SK-N-SH (cell line): ENCODE measurements at regions of chr19 and their contacts with region 1.

Region 1: GRCh38 chr19:16041299-16041990 is 34.9 kb upstream of the TPM4 start:
- DNase-seq: peak; percentile 90
- H3K4me3 ChIP-seq: peak overlapping the region in 1 of 2 experiments; percentile 42; a peak in 1 of 4 replicates
- H3K27ac ChIP-seq: no peak overlapping the region
- H3K4me1 ChIP-seq: no peaks in the 10 kb centered on the region; a peak in 1 of 4 replicates
- H3K27me3 ChIP-seq: peaks cover 8% of the 10 kb centered on the region; the same call in 1 of the 2 replicates
- CTCF ChIP-seq: peak; percentile 98
- EP300 ChIP-seq: no peak
- RAD21 ChIP-seq: peak; percentile 92

Region 2: GRCh38 chr19:16001481-16002312 is 39.7 kb before region 1 on chr19:
- CTCF ChIA-PET with region 1: no interaction called
- POLR2A ChIA-PET with region 1: no interaction called
- DNase-seq: no peak
- H3K4me3 ChIP-seq: peak overlapping the region; percentile 35 to 53; a peak in 3 of 4 replicates
- H3K27ac ChIP-seq: no peak overlapping the region
- H3K4me1 ChIP-seq: no peaks in the 10 kb centered on the region
- H3K27me3 ChIP-seq: no peaks in the 10 kb centered on the region
- CTCF ChIP-seq: no peak
- EP300 ChIP-seq: no peak
- RAD21 ChIP-seq: no peak

Region 3: GRCh38 chr19:16062789-16063188 is 21.3 kb after region 1 on chr19:
- CTCF ChIA-PET with region 1: interaction called, 25 read pairs
- POLR2A ChIA-PET with region 1: no interaction called
- DNase-seq: peak; percentile 73
- H3K4me3 ChIP-seq: no peak overlapping the region
- H3K27ac ChIP-seq: no peak overlapping the region
- H3K4me1 ChIP-seq: no peaks in the 10 kb centered on the region; a peak in 1 of 4 replicates
- H3K27me3 ChIP-seq: no peaks in the 10 kb centered on the region; the same call in 1 of the 2 replicates
- CTCF ChIP-seq: peak; percentile 90
- EP300 ChIP-seq: no peak
- RAD21 ChIP-seq: peak; percentile 36; the same call in 1 of the 2 replicates

Region 4: DNA sequence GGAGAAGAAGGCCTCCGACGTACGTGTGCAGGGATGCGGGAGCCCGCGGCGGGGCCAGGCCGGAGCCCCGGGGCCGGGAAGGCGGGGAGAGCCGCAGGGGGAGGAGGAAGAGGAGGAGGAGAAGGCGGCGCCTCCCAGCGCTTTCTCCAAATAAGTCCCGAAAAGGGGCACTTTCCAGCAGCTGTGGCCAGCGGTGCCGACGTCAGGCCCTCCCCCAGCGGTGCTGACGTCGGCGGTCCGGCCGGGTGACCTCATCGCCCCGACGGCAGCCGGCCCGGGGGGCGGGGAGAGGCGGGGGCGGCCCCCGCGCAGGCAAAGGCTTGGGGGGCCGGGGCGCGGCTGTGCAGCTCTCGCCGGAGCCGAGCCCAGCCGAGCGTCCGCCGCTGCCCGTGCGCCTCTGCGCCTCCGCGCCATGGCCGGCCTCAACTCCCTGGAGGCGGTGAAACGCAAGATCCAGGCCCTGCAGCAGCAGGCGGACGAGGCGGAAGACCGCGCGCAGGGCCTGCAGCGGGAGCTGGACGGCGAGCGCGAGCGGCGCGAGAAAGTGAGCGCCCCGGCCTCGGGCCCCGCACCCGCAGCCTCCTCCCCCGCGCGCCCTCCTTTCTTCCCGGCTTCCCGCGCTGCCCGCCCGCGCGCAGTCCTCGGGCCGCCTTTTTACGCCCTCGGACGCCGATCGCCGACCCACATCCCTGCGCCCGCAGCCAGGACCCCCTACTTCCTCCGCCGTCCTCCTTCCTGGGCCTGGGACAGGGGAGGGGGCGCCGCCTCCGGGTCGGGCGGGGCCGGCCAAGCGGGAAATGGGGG is 34.9 kb after region 1 on chr19 and contains the start of gene TPM4:
- CTCF ChIA-PET with region 1: interaction called, 37 read pairs
- POLR2A ChIA-PET with region 1: no interaction called
- DNase-seq: peak; percentile 86
- H3K4me3 ChIP-seq: peak within 1 kb of the TSS; percentile 74 to 78
- H3K27ac ChIP-seq: peak within 1 kb of the TSS; percentile 99
- H3K4me1 ChIP-seq: peaks cover 12 to 14% of the 10 kb centered on the region in 2 experiments
- H3K27me3 ChIP-seq: no peaks in the 10 kb centered on the region
- CTCF ChIP-seq: no peak
- EP300 ChIP-seq: no peak
- RAD21 ChIP-seq: no peak
- polyA plus RNA-seq, gene TPM4: 415 and 440 TPM in 2 replicates

Region 5: GRCh38 chr19:16111160-16111908 is 69.9 kb after region 1 on chr19 and contains the start of gene RAB8A:
- CTCF ChIA-PET with region 1: interaction called, 29 read pairs
- POLR2A ChIA-PET with region 1: no interaction called
- DNase-seq: peak; percentile 99
- H3K4me3 ChIP-seq: peak within 1 kb of the TSS; percentile 82 to 100
- H3K27ac ChIP-seq: peak within 1 kb of the TSS; percentile 66 to 74
- H3K4me1 ChIP-seq: peaks cover 9 to 10% of the 10 kb centered on the region in 2 experiments
- H3K27me3 ChIP-seq: no peaks in the 10 kb centered on the region
- CTCF ChIP-seq: peak; percentile 71
- EP300 ChIP-seq: no peak
- RAD21 ChIP-seq: peak; percentile 62
- polyA plus RNA-seq, gene RAB8A: 55.2 and 58.0 TPM in 2 replicates